ENCODE measurements at regions of chr19 and their contacts with region 1.

Region 1: GRCh38 chr19:16351133-16351809 is 26.6 kb downstream of the KLF2 start:
- DNase-seq: no peak
- ATAC-seq: peak; percentile 54 to 72 (median 64)
- H3K4me3 ChIP-seq: no peak overlapping the region
- H3K4me3 Mint-ChIP-seq: peak overlapping the region; percentile 39 to 67 (median 67)
- H3K27ac ChIP-seq: no peak overlapping the region
- H3K27ac Mint-ChIP-seq: peak overlapping the region; percentile 85 to 86
- H3K4me1 ChIP-seq: peaks cover 14 to 44% of the 10 kb centered on the region in 2 experiments
- H3K4me1 Mint-ChIP-seq: peaks cover 43 to 58% (median 48%) of the 10 kb centered on the region in 3 donors
- H3K27me3 ChIP-seq: no peaks in the 10 kb centered on the region
- H3K27me3 Mint-ChIP-seq: no peaks in the 10 kb centered on the region

Region 2: DNA sequence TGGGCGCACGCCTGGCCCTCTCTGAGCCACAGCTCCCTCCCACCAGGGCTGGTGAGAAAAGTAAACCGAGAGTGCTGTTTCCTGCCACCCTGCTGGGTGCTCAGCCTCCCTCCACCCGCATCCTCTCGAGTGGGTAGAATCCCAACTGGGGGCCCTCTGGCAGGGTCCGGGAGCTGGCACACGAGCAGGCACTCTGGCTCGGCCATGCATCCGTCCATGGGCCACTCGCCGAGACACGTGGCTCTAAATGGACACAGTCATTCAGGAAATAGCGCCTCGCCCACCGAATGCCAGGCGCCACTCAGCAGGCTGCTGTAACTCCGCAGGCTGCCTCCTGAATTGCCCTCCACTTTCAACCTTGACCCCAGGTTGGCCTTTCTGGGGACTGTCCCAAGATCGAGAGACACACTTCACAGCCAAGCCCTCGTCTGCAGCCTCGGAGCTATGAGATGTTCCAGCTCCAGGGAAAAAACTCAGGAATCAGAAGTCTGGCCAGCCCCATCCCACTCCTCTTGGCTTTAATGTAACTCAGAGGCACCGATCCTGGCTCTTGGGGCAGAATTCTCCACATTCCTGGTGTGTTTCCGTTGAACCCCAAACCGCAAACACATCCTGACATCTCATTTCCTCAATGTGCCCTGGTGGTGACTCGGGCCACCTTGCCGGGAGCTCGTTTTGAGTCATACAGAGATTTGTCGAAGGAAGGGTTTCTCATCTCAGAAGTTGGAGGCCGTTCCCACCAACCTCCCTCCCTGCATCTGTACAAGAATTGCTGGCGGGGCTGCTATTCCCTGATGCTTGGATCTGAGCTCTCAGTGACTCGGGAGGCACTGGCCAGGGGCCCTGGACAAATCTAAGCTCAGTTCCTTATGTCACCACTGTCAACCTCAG is 12.6 kb before region 1 on chr19:
- CTCF ChIA-PET with region 1: interaction called in 1 of 2 experiments, 5 read pairs
- POLR2A ChIA-PET with region 1: interaction called in 1 of 2 experiments, 13 read pairs
- DNase-seq: peak in 21 of 35 experiments; percentile 27 to 72 (median 44)
- ATAC-seq: peak; percentile 35 to 84 (median 79)
- H3K4me3 ChIP-seq: peak overlapping the region; percentile 30 to 35
- H3K4me3 Mint-ChIP-seq: peak overlapping the region; percentile 71 to 84 (median 83)
- H3K27ac ChIP-seq: peak overlapping the region; percentile 64
- H3K27ac Mint-ChIP-seq: peak overlapping the region; percentile 93 to 98
- H3K4me1 ChIP-seq: peaks cover 24 to 94% of the 10 kb centered on the region in 2 experiments
- H3K4me1 Mint-ChIP-seq: peaks cover 66 to 77% (median 71%) of the 10 kb centered on the region in 3 donors
- H3K27me3 ChIP-seq: no peaks in the 10 kb centered on the region
- H3K27me3 Mint-ChIP-seq: no peaks in the 10 kb centered on the region